Ascending aorta (tissue), 2 donors: ENCODE measurements at regions of chr12 and their contacts with region 1.

Region 1: GRCh38 chr12:121334513-121335343 is 17.5 kb downstream of the ANAPC5 start:
- DNase-seq: no peak
- H3K4me3 ChIP-seq: no peak overlapping the region
- H3K27ac ChIP-seq: no peak overlapping the region
- H3K4me1 ChIP-seq: no peaks in the 10 kb centered on the region
- H3K27me3 ChIP-seq: no peaks in the 10 kb centered on the region
- CTCF ChIP-seq: peak; percentile 51 to 84 (median 83)

Region 2: GRCh38 chr12:121427556-121428055 is 92.9 kb after region 1 on chr12:
- intact Hi-C with region 1: no loop called
- DNase-seq: no peak
- H3K4me3 ChIP-seq: no peak overlapping the region
- H3K27ac ChIP-seq: no peak overlapping the region
- H3K4me1 ChIP-seq: no peaks in the 10 kb centered on the region
- H3K27me3 ChIP-seq: no peaks in the 10 kb centered on the region
- CTCF ChIP-seq: no peak

Region 3: GRCh38 chr12:121443193-121443870 is 108.6 kb after region 1 on chr12:
- intact Hi-C with region 1: loop called (anchors 1 kb)
- DNase-seq: peak in 1 of 2 donors; percentile 88
- H3K4me3 ChIP-seq: no peak overlapping the region
- H3K27ac ChIP-seq: peak overlapping the region in 1 of 2 donors; percentile 28
- H3K4me1 ChIP-seq: peaks cover 0 to 5% of the 10 kb centered on the region in 2 donors
- H3K27me3 ChIP-seq: no peaks in the 10 kb centered on the region
- CTCF ChIP-seq: peak; percentile 84 to 91 (median 90)